CD14-positive monocyte (primary cell): ENCODE measurements at regions of chr11 and their contacts with region 1.

Region 1: GRCh38 chr11:92765965-92766371 is 203.5 kb upstream of the MTNR1B start:
- DNase-seq: peak in 1 of 3 donors; percentile 5
- H3K4me3 ChIP-seq: peak overlapping the region in 1 of 3 experiments; percentile 58
- H3K4me3 Mint-ChIP-seq: peak overlapping the region; percentile 49 to 90
- H3K27ac ChIP-seq: no peak overlapping the region
- H3K27ac Mint-ChIP-seq: peak overlapping the region in 2 of 7 donors; percentile 24 to 40
- H3K4me1 ChIP-seq: peaks cover 7 to 9% of the 10 kb centered on the region in 2 donors
- H3K4me1 Mint-ChIP-seq: peaks cover 16% of the 10 kb centered on the region
- H3K27me3 ChIP-seq: no peaks in the 10 kb centered on the region
- H3K27me3 Mint-ChIP-seq: peaks cover 0 to 12% (median 0%) of the 10 kb centered on the region in 3 donors
- CTCF ChIP-seq: no peak

Region 2: DNA sequence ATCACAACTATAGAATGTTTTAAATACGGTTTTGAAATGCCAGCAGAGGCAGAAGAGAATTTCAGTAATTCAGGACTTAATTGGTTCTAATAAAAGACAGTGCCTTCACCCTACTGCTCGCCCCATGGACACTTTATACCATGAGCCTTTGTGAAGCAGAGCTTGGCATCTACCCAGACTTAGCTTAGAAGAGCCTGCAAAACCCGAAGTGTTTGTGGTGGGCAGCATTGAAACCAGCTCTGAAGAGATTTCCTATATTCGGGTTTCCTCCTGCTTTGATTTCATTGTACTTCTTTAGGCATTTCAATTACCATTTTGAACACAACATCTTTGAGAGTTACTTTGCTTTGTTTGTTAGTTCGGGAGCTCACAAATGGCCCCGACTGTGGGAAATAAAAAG is 18.4 kb after region 1 on chr11:
- intact Hi-C with region 1: loop called in 1 of 2 experiments (anchors 1 kb)
- DNase-seq: no peak
- H3K4me3 ChIP-seq: no peak overlapping the region
- H3K4me3 Mint-ChIP-seq: no peak overlapping the region
- H3K27ac ChIP-seq: no peak overlapping the region
- H3K27ac Mint-ChIP-seq: no peak overlapping the region
- H3K4me1 ChIP-seq: no peaks in the 10 kb centered on the region
- H3K4me1 Mint-ChIP-seq: no peaks in the 10 kb centered on the region
- H3K27me3 ChIP-seq: no peaks in the 10 kb centered on the region
- H3K27me3 Mint-ChIP-seq: peaks cover 0 to 2% (median under 1%) of the 10 kb centered on the region in 3 donors
- CTCF ChIP-seq: no peak